ENCODE measurements at regions of chr14 and their contacts with region 1.

Region 1: GRCh38 chr14:64540208-64541157 is at the start of gene HSPA2:
- DNase-seq: peak; percentile 98
- H3K4me3 ChIP-seq: peak within 1 kb of the TSS; percentile 85
- CTCF ChIP-seq: peak; percentile 94

Region 2: GRCh38 chr14:64503478-64504309 is 36.8 kb before region 1 on chr14 and contains the start of gene ZBTB25:
- CTCF ChIA-PET with region 1: interaction called, 3 read pairs
- POLR2A ChIA-PET with region 1: interaction called, 17 read pairs
- DNase-seq: peak; percentile 58
- H3K4me3 ChIP-seq: peak within 1 kb of the TSS; percentile 86
- CTCF ChIP-seq: no peak

Region 3: GRCh38 chr14:64556526-64556925 is 16.0 kb after region 1 on chr14:
- CTCF ChIA-PET with region 1: interaction called, 11 read pairs
- POLR2A ChIA-PET with region 1: interaction called, 28 read pairs
- DNase-seq: peak; percentile 53
- H3K4me3 ChIP-seq: no peak overlapping the region
- CTCF ChIP-seq: no peak

Region 4: DNA sequence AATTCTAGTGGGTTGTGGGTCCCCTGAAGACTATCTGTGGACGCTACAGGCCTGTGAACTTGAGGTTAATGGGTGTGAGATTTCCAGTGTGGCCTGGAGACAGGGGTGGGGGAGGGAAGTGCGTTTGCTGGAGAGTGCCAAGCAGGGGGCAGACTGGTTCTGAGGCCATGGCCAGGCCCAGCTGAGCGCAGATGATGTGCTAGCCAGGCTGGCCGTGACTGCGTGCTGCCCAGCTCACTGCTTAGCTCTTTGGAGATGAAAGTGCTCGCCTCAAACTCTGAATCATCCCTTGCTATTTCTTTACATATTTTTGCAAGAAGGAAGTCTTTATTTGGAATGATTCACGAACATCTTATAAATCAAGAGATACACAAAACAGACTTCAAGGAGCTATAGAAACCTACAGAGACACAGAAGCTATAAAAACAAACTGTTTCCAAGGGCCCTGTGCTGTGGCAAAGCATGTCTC is 88.5 kb after region 1 on chr14:
- CTCF ChIA-PET with region 1: interaction called, 24 read pairs
- POLR2A ChIA-PET with region 1: interaction called, 33 read pairs
- DNase-seq: peak; percentile 96
- H3K4me3 ChIP-seq: no peak overlapping the region
- CTCF ChIP-seq: peak; percentile 24

Region 5: DNA sequence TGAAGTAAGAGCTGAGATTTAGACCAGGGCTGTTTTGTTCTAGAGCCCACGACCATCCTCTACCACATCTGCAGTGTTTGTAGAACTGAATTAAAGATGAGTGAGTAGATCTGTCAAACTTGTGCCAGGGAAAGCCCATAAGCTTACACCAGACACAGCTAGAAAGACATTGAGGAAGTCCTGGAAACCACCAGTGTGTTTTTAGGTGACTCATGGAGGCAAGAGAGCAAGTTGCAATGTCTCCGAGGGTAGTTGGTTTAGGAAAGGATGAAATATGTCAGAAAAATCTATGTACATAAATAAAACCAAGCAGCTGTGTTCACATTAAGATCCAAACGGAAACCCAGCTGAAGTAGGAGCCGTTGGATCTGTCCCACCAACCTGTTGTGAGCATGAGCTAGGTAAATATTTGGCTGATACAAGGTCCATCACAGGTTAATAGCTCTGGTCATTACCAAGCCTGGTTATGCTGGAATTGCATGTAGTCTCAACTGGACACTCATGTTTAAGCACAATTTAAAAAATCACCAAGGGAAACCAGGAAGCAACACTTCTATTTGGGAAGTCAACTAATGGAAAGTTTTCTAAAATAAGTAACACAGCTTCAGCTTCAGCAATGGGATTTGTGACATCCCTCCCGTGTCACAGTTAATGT is 113.9 kb after region 1 on chr14:
- CTCF ChIA-PET with region 1: interaction called, 14 read pairs
- POLR2A ChIA-PET with region 1: interaction called, 14 read pairs
- DNase-seq: peak; percentile 87
- H3K4me3 ChIP-seq: no peak overlapping the region
- CTCF ChIP-seq: no peak

Region 6: GRCh38 chr14:64800000-64800399 is 259.5 kb after region 1 on chr14:
- CTCF ChIA-PET with region 1: no interaction called
- POLR2A ChIA-PET with region 1: no interaction called
- DNase-seq: no peak
- H3K4me3 ChIP-seq: no peak overlapping the region
- CTCF ChIP-seq: peak; percentile 58

Measured in AG04449 (cell line).